PC-3 (cell line): ENCODE measurements at regions of chr1 and their contacts with region 1.

Region 1: GRCh38 chr1:184965944-184966860 is 8.1 kb downstream of the NIBAN1 start:
- DNase-seq: no peak
- ATAC-seq: no peak
- H3K4me3 ChIP-seq: no peak overlapping the region
- H3K27ac ChIP-seq: no peak overlapping the region
- H3K4me1 ChIP-seq: 0 out of 2 replicates have a peak, but pooled peaks cover 4% of the 10 kb centered on the region
- H3K27me3 ChIP-seq: no peaks in the 10 kb centered on the region
- CTCF ChIP-seq: no peak

Region 2: GRCh38 chr1:184915463-184916090 is 50.6 kb before region 1 on chr1:
- CTCF ChIA-PET with region 1: no interaction called
- POLR2A ChIA-PET with region 1: no interaction called
- intact Hi-C with region 1: loop called (anchors 5 kb)
- DNase-seq: no peak
- ATAC-seq: no peak
- H3K4me3 ChIP-seq: no peak overlapping the region
- H3K27ac ChIP-seq: no peak overlapping the region
- H3K4me1 ChIP-seq: no peaks in the 10 kb centered on the region
- H3K27me3 ChIP-seq: no peaks in the 10 kb centered on the region
- CTCF ChIP-seq: no peak